H1 (cell line): ENCODE measurements at regions of chr7 and their contacts with region 1.

Region 1: DNA sequence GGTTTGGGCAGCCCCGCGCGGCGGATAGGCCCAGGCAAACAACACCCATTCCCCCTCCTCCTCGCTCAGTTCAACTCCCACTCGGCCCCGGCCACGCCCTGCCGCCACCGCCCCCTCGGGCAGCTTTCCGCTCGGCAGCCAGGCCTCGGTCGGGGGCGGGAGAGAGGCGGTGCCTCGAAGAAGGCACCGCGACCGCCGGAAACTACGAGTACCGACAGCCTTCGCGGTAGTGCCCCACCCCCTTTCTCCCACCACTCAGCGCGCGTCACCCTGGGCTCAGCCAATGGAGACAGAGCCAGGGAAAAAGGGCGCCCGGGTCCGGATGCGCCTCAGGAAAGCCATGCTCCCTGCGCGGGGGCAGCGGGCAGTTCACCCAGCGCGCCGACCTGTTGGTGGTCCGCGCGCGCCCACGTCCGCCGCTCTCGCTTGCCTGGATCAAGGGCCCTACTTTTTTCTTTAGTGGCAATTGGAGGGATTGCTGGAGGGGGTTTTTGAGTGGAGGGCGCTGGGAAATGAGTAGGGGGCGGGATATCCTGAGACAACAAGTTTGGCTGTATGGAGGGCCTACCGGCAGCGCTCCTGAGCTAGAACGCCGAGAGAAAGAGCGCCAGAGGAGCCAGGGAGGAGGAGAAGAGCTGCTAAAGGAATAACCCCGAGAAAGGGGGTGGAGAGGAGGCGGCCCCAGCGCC is 557 bp upstream of the SP4 start:
- DNase-seq: peak; percentile 96
- H3K4me3 ChIP-seq: peak overlapping the region; percentile 68 to 97 (median 85)
- H3K27ac ChIP-seq: peak overlapping the region; percentile 92
- H3K4me1 ChIP-seq: peaks cover 10 to 23% (median 21%) of the 10 kb centered on the region in 4 experiments
- H3K27me3 ChIP-seq: no peaks in the 10 kb centered on the region
- CTCF ChIP-seq: peak in 2 of 3 experiments; percentile 0 to 15; a peak in 2 of 4 replicates
- EP300 ChIP-seq: 0 out of 3 replicates have a peak, but pooled peaks of 1 of the 2 experiments have one; percentile 7
- POLR2A ChIP-seq: peak; percentile 86 to 94
- RAD21 ChIP-seq: 0 out of 4 replicates have a peak, but pooled peaks of 1 of the 2 experiments have one; percentile 9

Region 2: DNA sequence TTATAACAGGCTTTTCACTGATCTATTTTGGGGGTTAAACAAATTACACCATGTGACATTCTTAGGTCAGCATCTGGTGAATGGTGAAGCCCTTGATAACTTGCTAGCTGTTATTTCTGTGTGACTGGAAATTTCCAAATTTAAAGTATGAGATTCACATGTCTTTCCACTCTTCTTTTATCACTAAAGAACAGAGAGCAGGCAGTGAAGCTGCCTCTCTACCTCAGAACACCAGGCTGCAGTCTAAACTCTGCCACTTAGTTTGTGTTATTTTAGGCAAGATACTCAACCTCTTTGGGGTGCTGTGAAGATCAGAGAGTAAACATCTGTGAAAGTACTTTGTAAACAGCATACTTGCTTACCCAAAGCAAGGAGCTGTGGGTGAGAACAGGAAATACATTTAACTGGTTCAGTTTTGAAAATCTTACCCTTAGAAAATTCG is 14.9 kb before region 1 on chr7:
- CTCF ChIA-PET with region 1: no interaction called
- POLR2A ChIA-PET with region 1: interaction called, 12 read pairs
- DNase-seq: no peak
- H3K4me3 ChIP-seq: no peak overlapping the region
- H3K27ac ChIP-seq: no peak overlapping the region
- H3K4me1 ChIP-seq: peaks cover 0 to 4% (median 2%) of the 10 kb centered on the region in 4 experiments; a peak in 2 of 7 replicates
- H3K27me3 ChIP-seq: no peaks in the 10 kb centered on the region
- CTCF ChIP-seq: no peak
- EP300 ChIP-seq: no peak
- POLR2A ChIP-seq: no peak
- RAD21 ChIP-seq: no peak

Region 3: GRCh38 chr7:21443149-21443841 is 16.0 kb after region 1 on chr7:
- CTCF ChIA-PET with region 1: interaction called, 4 read pairs
- POLR2A ChIA-PET with region 1: interaction called, 19 read pairs
- DNase-seq: no peak
- H3K4me3 ChIP-seq: no peak overlapping the region
- H3K27ac ChIP-seq: no peak overlapping the region
- H3K4me1 ChIP-seq: no peaks in the 10 kb centered on the region
- H3K27me3 ChIP-seq: no peaks in the 10 kb centered on the region
- CTCF ChIP-seq: no peak
- EP300 ChIP-seq: no peak
- POLR2A ChIP-seq: no peak
- RAD21 ChIP-seq: no peak